OCI-LY7 (cell line): ENCODE measurements at regions of chr10 and their contacts with region 1.

Region 1: GRCh38 chr10:113854011-113854760 is at the starts of genes DCLRE1A and NHLRC2:
- DNase-seq: peak; percentile 87
- H3K4me3 ChIP-seq: peak within 1 kb of the TSS; percentile 98
- H3K27ac ChIP-seq: peak within 1 kb of the TSS; percentile 76
- H3K4me1 ChIP-seq: peaks cover 66% of the 10 kb centered on the region
- CTCF ChIP-seq: no peak
- total RNA-seq, gene DCLRE1A: 11.5 and 12.3 TPM in 2 replicates
- total RNA-seq, gene NHLRC2: 28.6 and 64.1 TPM in 2 replicates

Region 2: DNA sequence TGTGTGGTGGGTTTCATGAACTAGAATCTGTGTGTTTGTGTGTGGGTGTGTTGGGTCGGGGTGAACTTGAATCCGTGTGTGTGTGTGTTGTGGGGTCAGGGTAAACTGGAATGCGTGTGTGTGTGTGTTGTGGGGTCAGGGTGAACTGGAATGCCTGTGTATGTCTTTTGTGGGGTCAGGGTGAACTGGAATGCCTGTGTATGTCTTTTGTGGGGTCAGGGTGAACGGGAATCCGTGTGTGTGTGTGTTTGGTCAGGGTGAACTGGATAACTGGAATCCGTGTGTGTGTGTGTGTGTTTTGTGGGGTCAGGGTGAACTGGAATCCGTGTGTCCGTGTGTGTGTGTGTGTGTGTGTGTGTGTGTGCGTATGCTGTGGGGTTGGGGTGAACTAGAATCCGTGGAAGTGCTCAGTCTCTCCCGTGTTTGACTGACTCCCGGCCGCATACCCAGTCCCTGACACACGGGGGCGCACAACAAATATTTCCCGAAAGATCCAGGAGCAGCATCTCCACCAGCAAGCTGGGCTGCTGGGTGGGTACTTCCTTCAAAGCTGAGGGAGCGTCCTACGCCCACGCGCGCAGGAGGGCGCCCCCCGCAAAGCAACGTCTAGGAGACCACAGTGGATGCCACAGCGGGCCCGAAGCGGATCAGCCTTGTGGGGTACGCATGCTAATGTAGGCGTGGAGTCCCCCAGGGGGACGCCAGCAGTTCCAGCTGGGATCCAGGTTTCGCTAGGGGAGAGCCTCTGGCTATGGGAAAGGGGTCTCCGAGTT is 175.3 kb before region 1 on chr10:
- CTCF ChIA-PET with region 1: no interaction called
- POLR2A ChIA-PET with region 1: no interaction called
- intact Hi-C with region 1: loop called (anchors 5 kb)
- DNase-seq: peak; percentile 79
- H3K4me3 ChIP-seq: peak overlapping the region; percentile 95
- H3K27ac ChIP-seq: peak overlapping the region; percentile 44
- H3K4me1 ChIP-seq: peaks cover 20% of the 10 kb centered on the region
- CTCF ChIP-seq: peak; percentile 75

Region 3: DNA sequence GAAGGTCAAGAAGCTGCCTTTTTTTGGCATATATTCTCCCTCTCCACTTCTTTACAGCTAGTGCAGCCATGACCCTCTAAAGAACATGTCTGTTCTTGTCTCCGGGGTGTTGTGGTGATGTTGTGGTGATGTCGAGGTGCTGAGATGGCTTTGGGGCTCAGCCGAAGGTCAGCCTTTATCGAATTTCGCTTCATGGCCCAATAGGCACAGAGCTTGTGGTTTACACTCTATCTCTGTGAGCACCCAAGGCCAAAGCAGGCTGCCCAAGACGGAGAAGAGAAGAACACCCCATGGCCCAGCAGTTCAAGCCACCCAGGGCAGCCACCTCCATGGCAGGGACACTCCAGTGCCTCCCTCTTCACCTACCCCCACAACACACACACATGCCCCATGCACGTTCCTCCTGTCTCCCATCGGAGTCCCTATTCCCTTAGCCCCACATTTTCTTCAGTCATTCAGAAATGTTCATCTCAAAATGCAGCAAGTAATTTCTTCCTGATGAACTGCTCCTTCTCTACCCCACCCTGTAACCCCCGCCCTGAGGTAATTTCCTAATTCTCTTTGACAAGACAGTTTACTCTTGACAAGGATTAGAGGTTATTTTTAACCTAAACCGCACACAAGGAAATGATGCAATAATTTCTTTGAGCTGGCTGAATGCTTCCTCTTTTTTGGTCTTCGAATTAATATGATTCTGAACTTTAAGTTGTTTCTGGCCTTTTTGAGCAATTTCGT is 170.9 kb after region 1 on chr10:
- CTCF ChIA-PET with region 1: no interaction called
- POLR2A ChIA-PET with region 1: interaction called, 3 read pairs
- intact Hi-C with region 1: loop called (anchors 5 kb)
- DNase-seq: peak; percentile 91
- H3K4me3 ChIP-seq: peak overlapping the region; percentile 56
- H3K27ac ChIP-seq: peak overlapping the region; percentile 67
- H3K4me1 ChIP-seq: peaks cover 36% of the 10 kb centered on the region
- CTCF ChIP-seq: no peak

Region 4: DNA sequence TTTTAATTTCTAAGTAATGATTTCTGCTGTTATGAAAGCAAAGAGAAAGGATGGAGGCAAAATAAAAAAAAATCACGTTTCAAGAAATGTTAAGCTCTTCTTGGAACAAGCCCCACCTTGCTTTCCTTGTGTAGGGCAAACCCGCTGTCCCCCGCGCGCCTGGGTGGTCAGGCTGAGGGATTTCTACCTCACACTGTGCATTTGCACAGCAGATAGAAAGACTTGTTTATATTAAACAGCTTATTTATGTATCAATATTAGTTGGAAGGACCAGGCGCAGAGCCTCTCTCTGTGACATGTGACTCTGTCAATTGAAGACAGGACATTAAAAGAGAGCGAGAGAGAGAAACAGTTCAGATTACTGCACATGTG is 191.9 kb after region 1 on chr10:
- CTCF ChIA-PET with region 1: no interaction called
- POLR2A ChIA-PET with region 1: no interaction called
- intact Hi-C with region 1: no loop called
- DNase-seq: no peak
- H3K4me3 ChIP-seq: no peak overlapping the region
- H3K27ac ChIP-seq: no peak overlapping the region
- H3K4me1 ChIP-seq: peaks cover 8% of the 10 kb centered on the region
- CTCF ChIP-seq: no peak

Region 5: DNA sequence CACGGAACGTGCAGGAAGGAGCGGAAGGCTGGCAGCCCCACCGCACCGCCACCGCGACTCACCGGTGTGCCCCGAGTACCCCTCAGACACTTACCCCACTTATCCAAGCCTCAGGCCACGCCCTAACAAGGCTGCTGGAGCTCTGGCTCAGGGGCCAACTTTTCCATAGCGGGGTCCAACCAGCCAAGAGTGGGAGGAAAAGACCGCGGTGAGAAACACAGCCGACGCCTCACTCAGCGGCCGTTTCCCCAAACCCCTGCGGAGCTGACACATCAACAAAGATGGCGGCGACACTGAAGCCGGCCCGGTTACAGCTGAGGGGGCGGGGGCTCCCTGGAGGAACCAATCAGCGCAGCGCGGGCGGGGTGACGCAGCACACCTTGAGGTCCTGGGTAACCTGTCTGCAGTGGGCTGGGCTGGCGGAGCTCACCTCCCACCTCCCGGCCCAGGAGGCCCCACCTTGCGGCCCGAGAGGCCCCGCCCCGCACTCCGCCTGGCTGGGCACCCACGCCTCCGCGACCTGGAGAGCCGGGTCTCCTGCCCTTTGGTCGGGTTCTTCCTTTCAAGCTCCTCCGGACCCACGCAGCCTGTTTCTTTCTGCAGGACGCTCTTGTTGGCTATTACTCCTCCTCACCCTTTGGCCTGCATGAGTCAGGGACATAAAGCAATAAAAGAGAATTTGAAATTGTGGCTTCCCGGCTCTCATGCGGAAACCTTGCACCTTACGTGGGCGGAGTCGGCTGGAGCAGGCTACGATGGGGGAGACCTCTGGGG is 319.9 kb after region 1 on chr10 and contains the start of gene CCDC186:
- CTCF ChIA-PET with region 1: no interaction called
- POLR2A ChIA-PET with region 1: interaction called, 3 read pairs
- intact Hi-C with region 1: loop called (anchors 5 kb)
- DNase-seq: peak; percentile 96
- H3K4me3 ChIP-seq: peak within 1 kb of the TSS; percentile 73
- H3K27ac ChIP-seq: no peak within 1 kb of the TSS
- H3K4me1 ChIP-seq: peaks cover 16% of the 10 kb centered on the region
- CTCF ChIP-seq: no peak
- total RNA-seq, gene CCDC186: 5.3 and 8.1 TPM in 2 replicates

Region 6: GRCh38 chr10:114526504-114527238 is 672.5 kb after region 1 on chr10:
- CTCF ChIA-PET with region 1: no interaction called
- POLR2A ChIA-PET with region 1: no interaction called
- intact Hi-C with region 1: loop called (anchors 10 kb)
- DNase-seq: peak; percentile 98
- H3K4me3 ChIP-seq: peak overlapping the region; percentile 89
- H3K27ac ChIP-seq: peak overlapping the region; percentile 91
- H3K4me1 ChIP-seq: peaks cover 35% of the 10 kb centered on the region
- CTCF ChIP-seq: no peak